Endothelial cell of umbilical vein (primary cell): ENCODE measurements at regions of chr1 and their contacts with region 1.

Region 1: GRCh38 chr1:12124693-12125421 is 41.9 kb upstream of the TNFRSF1B start:
- DNase-seq: peak; percentile 77
- H3K4me3 ChIP-seq: no peak overlapping the region
- H3K27ac ChIP-seq: no peak overlapping the region
- H3K4me1 ChIP-seq: peaks cover 9% of the 10 kb centered on the region
- H3K27me3 ChIP-seq: peaks cover 0 to 3% of the 10 kb centered on the region in 2 experiments
- CTCF ChIP-seq: peak; percentile 77 to 91
- POLR2A ChIP-seq: no peak

Region 2: DNA sequence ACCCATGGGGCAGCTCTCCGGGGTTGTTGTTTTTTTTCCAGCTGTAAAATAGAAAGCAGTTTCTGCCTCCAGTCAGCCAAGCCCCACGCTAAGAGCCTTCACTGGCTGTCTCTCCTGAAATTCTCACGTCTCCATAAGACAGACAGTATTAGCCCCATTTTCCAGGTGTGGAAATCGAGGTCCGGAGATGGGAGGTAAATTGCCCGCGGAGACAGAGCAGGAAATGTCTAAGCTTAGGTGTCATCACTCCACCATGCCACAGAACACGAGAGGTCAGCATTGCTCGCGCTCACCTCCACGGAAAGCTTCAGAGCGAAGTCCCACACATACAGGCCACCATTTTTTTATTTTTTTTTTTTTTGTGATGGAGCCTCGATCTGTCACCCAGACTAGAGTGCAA is 17.1 kb before region 1 on chr1:
- CTCF ChIA-PET with region 1: interaction called, 17 read pairs
- POLR2A ChIA-PET with region 1: interaction called, 3 read pairs
- dilution Hi-C with region 1: no loop called
- intact Hi-C with region 1: no loop called
- DNase-seq: no peak
- H3K4me3 ChIP-seq: no peak overlapping the region
- H3K27ac ChIP-seq: no peak overlapping the region
- H3K4me1 ChIP-seq: no peaks in the 10 kb centered on the region
- H3K27me3 ChIP-seq: peaks cover 0 to 2% of the 10 kb centered on the region in 2 experiments
- CTCF ChIP-seq: no peak
- POLR2A ChIP-seq: no peak

Region 3: DNA sequence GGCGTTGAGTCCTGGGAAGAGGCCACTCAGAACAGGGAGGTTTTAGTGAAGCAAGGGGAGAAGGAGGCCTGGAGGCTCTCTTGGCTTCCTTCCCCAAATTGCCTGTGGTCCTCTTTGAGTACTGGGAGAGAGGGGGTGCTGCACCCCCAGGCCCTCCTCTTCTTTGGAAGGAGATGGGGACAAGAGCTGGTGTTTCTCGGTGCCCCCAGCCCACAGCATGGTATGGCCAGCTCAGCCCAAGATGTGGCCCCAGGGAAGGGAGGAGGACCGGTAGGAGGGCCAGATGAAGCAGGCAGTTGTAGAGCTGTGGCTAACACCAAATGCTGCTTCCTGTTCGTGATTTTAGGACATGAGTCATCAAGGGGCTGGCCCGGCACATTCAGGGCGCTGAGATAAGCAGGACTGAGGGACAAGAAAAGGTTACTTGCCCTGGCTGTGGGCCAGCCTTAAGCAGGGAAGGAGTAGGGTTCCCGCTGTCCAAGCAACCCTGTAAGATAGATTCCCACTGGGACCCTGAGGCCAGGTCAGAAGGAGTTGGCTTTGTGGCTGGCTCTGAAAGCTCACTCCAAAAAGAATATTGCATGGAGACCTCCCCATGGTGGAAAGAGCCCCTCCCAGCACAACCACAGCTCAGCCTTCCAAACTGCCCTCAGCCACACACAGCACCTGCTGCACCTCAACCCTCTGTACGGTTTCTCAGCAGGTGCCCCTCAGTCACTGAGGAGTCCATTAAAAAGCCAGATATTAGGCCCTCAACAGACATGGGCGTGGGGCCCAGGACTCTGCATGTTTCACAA is 37.0 kb after region 1 on chr1:
- CTCF ChIA-PET with region 1: interaction called, 48 read pairs
- POLR2A ChIA-PET with region 1: no interaction called
- dilution Hi-C with region 1: no loop called
- intact Hi-C with region 1: no loop called
- DNase-seq: peak; percentile 96
- H3K4me3 ChIP-seq: no peak overlapping the region
- H3K27ac ChIP-seq: peak overlapping the region; percentile 59
- H3K4me1 ChIP-seq: peaks cover 23% of the 10 kb centered on the region
- H3K27me3 ChIP-seq: no peaks in the 10 kb centered on the region
- CTCF ChIP-seq: no peak
- POLR2A ChIP-seq: no peak

Region 4: GRCh38 chr1:12184008-12184681 is 59.3 kb after region 1 on chr1:
- CTCF ChIA-PET with region 1: interaction called, 118 read pairs
- POLR2A ChIA-PET with region 1: no interaction called
- dilution Hi-C with region 1: no loop called
- intact Hi-C with region 1: loop called (anchors 1 kb)
- DNase-seq: peak; percentile 93
- H3K4me3 ChIP-seq: no peak overlapping the region
- H3K27ac ChIP-seq: peak overlapping the region; percentile 90
- H3K4me1 ChIP-seq: peaks cover 31% of the 10 kb centered on the region
- H3K27me3 ChIP-seq: no peaks in the 10 kb centered on the region
- CTCF ChIP-seq: peak; percentile 42 to 55
- POLR2A ChIP-seq: no peak

Region 5: DNA sequence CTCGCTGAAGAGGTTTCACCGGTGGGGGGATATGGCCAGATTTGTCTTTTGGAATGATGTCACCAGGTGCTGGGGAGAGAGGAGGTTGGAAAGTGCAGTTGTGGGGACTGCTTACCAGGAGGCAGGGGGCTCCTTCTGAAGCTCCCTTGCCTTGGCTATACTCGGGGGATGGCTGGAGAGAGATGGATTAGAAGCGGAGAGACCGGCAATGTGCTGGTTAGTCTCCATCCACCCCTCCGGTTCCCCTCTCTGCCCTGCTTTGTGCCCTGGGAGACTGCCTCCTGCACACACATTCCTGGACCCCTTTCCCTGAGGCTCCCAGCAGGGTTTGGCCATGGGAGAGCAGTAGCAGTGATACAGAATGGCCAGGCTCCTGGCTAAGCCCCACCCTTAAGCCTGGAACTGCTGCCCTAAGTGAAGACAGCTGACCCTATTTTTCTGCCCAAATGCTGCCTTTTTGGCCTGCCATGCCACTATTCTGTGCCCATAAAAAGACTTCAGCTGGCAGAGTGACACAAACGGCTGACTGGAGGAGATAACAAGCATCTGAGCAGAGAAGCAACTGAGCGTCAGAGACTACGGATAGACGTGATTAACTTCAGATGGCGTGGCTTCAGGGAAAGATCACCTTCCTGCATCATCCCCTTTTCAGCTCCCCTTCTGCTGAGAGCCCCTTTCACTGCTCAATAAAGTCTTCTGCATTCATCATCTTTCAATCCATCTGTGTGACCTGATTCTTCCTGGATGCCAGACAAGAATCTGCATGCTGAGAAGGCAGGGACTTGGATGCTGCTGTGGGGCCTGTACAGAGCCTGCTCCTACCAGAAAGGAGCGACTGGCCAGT is 90.5 kb after region 1 on chr1:
- CTCF ChIA-PET with region 1: interaction called, 537 read pairs
- POLR2A ChIA-PET with region 1: no interaction called
- dilution Hi-C with region 1: no loop called
- intact Hi-C with region 1: no loop called
- DNase-seq: no peak
- H3K4me3 ChIP-seq: no peak overlapping the region
- H3K27ac ChIP-seq: no peak overlapping the region
- H3K4me1 ChIP-seq: no peaks in the 10 kb centered on the region
- H3K27me3 ChIP-seq: peaks cover 0 to 12% of the 10 kb centered on the region in 2 experiments
- CTCF ChIP-seq: no peak
- POLR2A ChIP-seq: no peak

Region 6: DNA sequence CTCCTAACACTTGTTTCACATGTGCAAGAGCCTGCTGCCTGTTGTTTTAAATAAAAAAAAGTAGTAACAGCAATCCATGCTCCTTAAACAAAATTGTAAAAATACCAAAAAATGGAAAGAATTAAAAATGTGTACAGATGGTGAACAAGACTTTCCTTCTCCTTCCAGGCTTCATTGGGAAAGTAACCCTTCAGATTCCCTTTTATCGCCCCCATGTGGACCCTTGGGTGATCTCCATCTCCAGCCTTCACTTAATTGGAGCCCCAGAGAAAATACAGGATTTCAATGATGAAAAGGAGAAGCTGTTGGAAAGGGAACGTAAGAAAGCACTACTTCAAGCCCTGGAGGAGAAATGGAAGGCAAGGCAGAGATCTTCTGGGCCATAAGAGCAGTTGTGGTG is 119.2 kb after region 1 on chr1:
- CTCF ChIA-PET with region 1: interaction called, 55 read pairs
- POLR2A ChIA-PET with region 1: no interaction called
- dilution Hi-C with region 1: no loop called
- intact Hi-C with region 1: loop called (anchors 2 kb)
- DNase-seq: peak; percentile 35
- H3K4me3 ChIP-seq: no peak overlapping the region
- H3K27ac ChIP-seq: no peak overlapping the region
- H3K4me1 ChIP-seq: no peaks in the 10 kb centered on the region
- H3K27me3 ChIP-seq: no peaks in the 10 kb centered on the region
- CTCF ChIP-seq: peak; percentile 53 to 62
- POLR2A ChIP-seq: no peak

Region 7: GRCh38 chr1:12658531-12659453 is 533.9 kb after region 1 on chr1:
- CTCF ChIA-PET with region 1: interaction called, 15 read pairs
- POLR2A ChIA-PET with region 1: no interaction called
- dilution Hi-C with region 1: no loop called
- intact Hi-C with region 1: loop called (anchors 2 kb)
- DNase-seq: peak; percentile 84
- H3K4me3 ChIP-seq: no peak overlapping the region
- H3K27ac ChIP-seq: no peak overlapping the region
- H3K4me1 ChIP-seq: no peaks in the 10 kb centered on the region
- H3K27me3 ChIP-seq: peaks cover 0 to 8% of the 10 kb centered on the region in 2 experiments
- CTCF ChIP-seq: peak; percentile 86 to 96
- POLR2A ChIP-seq: no peak